ENCODE measurements at regions of chr6 and their contacts with region 1.

Region 1: GRCh38 chr6:33029328-33030184 is 20.2 kb upstream of the HLA-DOA start:
- DNase-seq: peak; percentile 64
- CTCF ChIP-seq: peak; percentile 19

Region 2: GRCh38 chr6:33000055-33000454 is 29.5 kb before region 1 on chr6:
- CTCF ChIA-PET with region 1: no interaction called
- POLR2A ChIA-PET with region 1: no interaction called
- DNase-seq: peak; percentile 60
- CTCF ChIP-seq: peak; percentile 31

Region 3: DNA sequence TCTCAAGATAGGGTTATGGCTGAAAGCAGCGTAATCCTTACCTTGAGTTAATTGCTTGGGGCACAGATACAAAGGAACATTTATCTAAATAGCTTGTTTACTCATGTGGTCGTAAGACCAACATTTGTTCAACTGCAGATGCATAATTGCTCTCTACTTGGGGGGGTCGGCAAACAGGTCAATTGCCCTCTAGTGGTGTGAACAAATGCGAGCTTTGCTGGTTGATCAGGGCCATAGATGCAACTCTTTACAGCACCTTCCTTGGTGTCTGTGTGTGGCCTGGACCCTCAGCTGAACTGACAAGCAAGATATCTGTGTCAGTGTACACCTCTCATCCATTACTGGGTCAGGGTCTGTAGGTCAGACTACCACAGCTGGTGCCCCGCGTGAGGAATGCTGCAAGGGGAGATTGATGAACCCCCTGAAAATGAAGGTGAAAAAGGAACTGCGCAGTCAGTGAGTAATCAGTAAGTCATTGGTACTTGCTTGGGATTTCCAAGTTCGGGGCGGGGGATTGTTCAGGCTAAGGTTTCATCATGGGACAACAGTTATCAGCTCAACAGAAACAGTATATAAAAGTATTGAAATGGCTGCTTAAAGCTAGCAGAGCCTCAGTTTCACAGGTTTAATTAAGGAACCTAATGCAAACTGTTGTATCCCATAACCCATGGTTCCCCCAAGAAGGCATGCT is 19.9 kb after region 1 on chr6:
- CTCF ChIA-PET with region 1: interaction called, 39 read pairs
- POLR2A ChIA-PET with region 1: no interaction called
- DNase-seq: no peak
- CTCF ChIP-seq: peak; percentile 17

Region 4: GRCh38 chr6:33082702-33083101 is 53.1 kb after region 1 on chr6:
- CTCF ChIA-PET with region 1: interaction called, 4 read pairs
- POLR2A ChIA-PET with region 1: interaction called, 11 read pairs
- DNase-seq: peak; percentile 42
- CTCF ChIP-seq: peak; percentile 57

Measured in GM10248 (cell line).